Natural killer cell (primary cell): ENCODE measurements at regions of chr12 and their contacts with region 1.

Region 1: GRCh38 chr12:111529424-111530368 is 69.4 kb downstream of the ATXN2 start:
- DNase-seq: peak; percentile 58 to 84
- ATAC-seq: peak; percentile 86 to 99 (median 99)
- H3K4me3 ChIP-seq: no peak overlapping the region
- H3K4me3 Mint-ChIP-seq: no peak overlapping the region
- H3K27ac ChIP-seq: no peak overlapping the region
- H3K27ac Mint-ChIP-seq: peak overlapping the region in 1 of 2 donors; percentile 16
- H3K4me1 ChIP-seq: no peaks in the 10 kb centered on the region
- H3K4me1 Mint-ChIP-seq: peaks cover 6% of the 10 kb centered on the region in 2 donors
- H3K27me3 ChIP-seq: no peaks in the 10 kb centered on the region
- H3K27me3 Mint-ChIP-seq: no peaks in the 10 kb centered on the region
- CTCF ChIP-seq: peak; percentile 81

Region 2: GRCh38 chr12:111396726-111397445 is 132.8 kb before region 1 on chr12:
- intact Hi-C with region 1: loop called (anchors 1 kb)
- DNase-seq: peak; percentile 91 to 93
- ATAC-seq: peak; percentile 92 to 97 (median 94)
- H3K4me3 ChIP-seq: no peak overlapping the region
- H3K4me3 Mint-ChIP-seq: peak overlapping the region; percentile 60
- H3K27ac ChIP-seq: no peak overlapping the region
- H3K27ac Mint-ChIP-seq: peak overlapping the region in 1 of 2 donors; percentile 87
- H3K4me1 ChIP-seq: peaks cover 16% of the 10 kb centered on the region
- H3K4me1 Mint-ChIP-seq: peaks cover 0 to 20% of the 10 kb centered on the region in 2 donors
- H3K27me3 ChIP-seq: no peaks in the 10 kb centered on the region
- H3K27me3 Mint-ChIP-seq: peaks cover 6 to 12% of the 10 kb centered on the region in 2 donors
- CTCF ChIP-seq: peak; percentile 99

Region 3: GRCh38 chr12:111488798-111489197 is 40.9 kb before region 1 on chr12:
- intact Hi-C with region 1: no loop called
- DNase-seq: no peak
- ATAC-seq: no peak
- H3K4me3 ChIP-seq: no peak overlapping the region
- H3K4me3 Mint-ChIP-seq: no peak overlapping the region
- H3K27ac ChIP-seq: no peak overlapping the region
- H3K27ac Mint-ChIP-seq: no peak overlapping the region
- H3K4me1 ChIP-seq: no peaks in the 10 kb centered on the region
- H3K4me1 Mint-ChIP-seq: no peaks in the 10 kb centered on the region
- H3K27me3 ChIP-seq: no peaks in the 10 kb centered on the region
- H3K27me3 Mint-ChIP-seq: no peaks in the 10 kb centered on the region
- CTCF ChIP-seq: no peak